T-cell (primary cell): ENCODE measurements at regions of chr20 and their contacts with region 1.

Region 1: DNA sequence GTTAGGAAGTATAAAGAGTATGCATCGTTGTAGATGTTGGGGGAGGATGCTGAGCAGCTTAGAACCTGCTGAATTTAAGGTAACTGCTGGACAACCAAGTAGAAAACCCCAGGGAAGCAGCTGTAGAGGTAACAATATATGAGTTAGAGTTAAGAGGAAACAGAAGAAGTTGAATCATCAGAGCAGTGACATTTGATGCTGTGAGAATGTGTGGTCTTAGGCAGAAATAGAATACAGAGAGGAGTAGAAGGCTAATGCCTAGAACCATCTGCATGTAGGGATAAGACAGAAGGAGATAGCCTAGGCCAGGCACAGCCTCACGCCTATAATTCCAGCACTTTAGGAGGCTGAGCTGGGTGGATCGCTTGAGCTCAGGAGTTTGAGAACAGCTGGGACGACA is 22.6 kb upstream of the DYNLRB1 start:
- DNase-seq: no peak
- ATAC-seq: no peak
- H3K4me3 ChIP-seq: no peak overlapping the region
- H3K4me3 Mint-ChIP-seq: no peak overlapping the region
- H3K27ac ChIP-seq: no peak overlapping the region
- H3K27ac Mint-ChIP-seq: no peak overlapping the region
- H3K4me1 ChIP-seq: no peaks in the 10 kb centered on the region
- H3K4me1 Mint-ChIP-seq: peaks cover 0 to 6% (median 0%) of the 10 kb centered on the region in 3 donors
- H3K27me3 ChIP-seq: no peaks in the 10 kb centered on the region
- H3K27me3 Mint-ChIP-seq: no peaks in the 10 kb centered on the region

Region 2: GRCh38 chr20:35443003-35443402 is 949.4 kb after region 1 on chr20:
- CTCF ChIA-PET with region 1: interaction called in 1 of 2 experiments, 10 read pairs
- POLR2A ChIA-PET with region 1: interaction called in 1 of 2 experiments, 5 read pairs
- DNase-seq: no peak
- ATAC-seq: no peak
- H3K4me3 ChIP-seq: no peak overlapping the region
- H3K4me3 Mint-ChIP-seq: no peak overlapping the region
- H3K27ac ChIP-seq: no peak overlapping the region
- H3K27ac Mint-ChIP-seq: no peak overlapping the region
- H3K4me1 ChIP-seq: peaks cover 0 to 11% of the 10 kb centered on the region in 2 experiments
- H3K4me1 Mint-ChIP-seq: peaks cover 4 to 9% (median 6%) of the 10 kb centered on the region in 3 donors
- H3K27me3 ChIP-seq: peaks cover 0 to 46% of the 10 kb centered on the region in 2 experiments
- H3K27me3 Mint-ChIP-seq: peaks cover 8 to 9% of the 10 kb centered on the region in 2 donors